Thyroid gland (tissue), 4 donors: ENCODE measurements at regions of chr11 and their contacts with region 1.

Region 1: DNA sequence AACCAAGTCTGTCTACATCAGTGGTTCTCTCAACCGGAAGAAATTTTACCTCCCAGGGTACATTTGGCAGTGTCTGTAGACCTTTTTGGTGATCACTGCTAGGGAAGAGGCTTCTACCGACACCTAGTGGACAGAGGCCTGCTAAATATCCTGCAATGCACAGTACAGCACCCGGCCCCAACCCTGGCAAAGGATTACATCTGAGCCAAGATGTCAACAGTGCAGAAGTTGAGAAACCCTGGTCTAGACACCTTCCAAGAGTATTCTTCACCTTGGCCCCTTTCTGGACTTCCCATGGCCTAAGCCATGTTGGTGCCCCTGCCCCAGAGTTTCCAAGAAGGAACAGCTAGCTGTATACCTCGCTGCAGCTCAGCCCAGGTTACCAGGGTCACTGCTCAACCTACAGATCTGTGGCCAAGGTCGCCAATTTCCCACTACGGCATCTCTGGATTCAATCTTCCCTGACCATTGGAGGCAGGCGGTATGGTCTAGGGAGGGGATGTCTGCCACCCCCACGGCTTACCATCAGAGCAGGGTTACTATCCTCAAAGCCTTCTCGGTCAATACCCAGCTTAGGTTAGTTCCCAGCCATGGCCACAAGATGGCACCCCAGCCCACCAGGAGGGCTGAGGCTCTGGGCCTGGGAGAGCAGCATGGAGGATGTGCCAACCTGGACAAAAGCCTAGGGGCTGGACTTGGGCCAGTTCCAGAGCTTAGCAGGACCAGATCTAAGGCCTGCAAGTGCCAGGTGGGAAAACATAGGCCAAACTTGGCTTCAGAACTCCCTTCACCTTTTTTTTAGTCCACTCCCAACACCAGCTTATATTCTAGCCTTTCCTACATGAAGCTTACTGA is 3.7 kb upstream of the KCNC1 start:
- DNase-seq: peak; percentile 95
- H3K4me3 ChIP-seq: no peak overlapping the region
- H3K27ac ChIP-seq: no peak overlapping the region
- H3K4me1 ChIP-seq: peaks cover 12 to 16% of the 10 kb centered on the region in 2 donors
- H3K27me3 ChIP-seq: peaks cover 4% of the 10 kb centered on the region
- CTCF ChIP-seq: peak; percentile 61 to 97 (median 88)
- POLR2A ChIP-seq: no peak

Region 2: GRCh38 chr11:17979770-17980371 is 249.0 kb after region 1 on chr11:
- intact Hi-C with region 1: loop called (anchors 2 kb)
- DNase-seq: peak; percentile 19 to 25
- H3K4me3 ChIP-seq: no peak overlapping the region
- H3K27ac ChIP-seq: no peak overlapping the region
- H3K4me1 ChIP-seq: peaks cover 2 to 3% of the 10 kb centered on the region in 2 donors
- H3K27me3 ChIP-seq: no peaks in the 10 kb centered on the region
- CTCF ChIP-seq: peak; percentile 79 to 92 (median 86)
- POLR2A ChIP-seq: no peak

Region 3: GRCh38 chr11:18115360-18116127 is 384.7 kb after region 1 on chr11:
- intact Hi-C with region 1: loop called (anchors 5 kb)
- DNase-seq: peak; percentile 52 to 61
- H3K4me3 ChIP-seq: no peak overlapping the region
- H3K27ac ChIP-seq: no peak overlapping the region
- H3K4me1 ChIP-seq: no peaks in the 10 kb centered on the region
- H3K27me3 ChIP-seq: no peaks in the 10 kb centered on the region
- CTCF ChIP-seq: peak; percentile 68 to 87 (median 76)
- POLR2A ChIP-seq: no peak